ENCODE measurements at regions of chr12 and their contacts with region 1.

Region 1: DNA sequence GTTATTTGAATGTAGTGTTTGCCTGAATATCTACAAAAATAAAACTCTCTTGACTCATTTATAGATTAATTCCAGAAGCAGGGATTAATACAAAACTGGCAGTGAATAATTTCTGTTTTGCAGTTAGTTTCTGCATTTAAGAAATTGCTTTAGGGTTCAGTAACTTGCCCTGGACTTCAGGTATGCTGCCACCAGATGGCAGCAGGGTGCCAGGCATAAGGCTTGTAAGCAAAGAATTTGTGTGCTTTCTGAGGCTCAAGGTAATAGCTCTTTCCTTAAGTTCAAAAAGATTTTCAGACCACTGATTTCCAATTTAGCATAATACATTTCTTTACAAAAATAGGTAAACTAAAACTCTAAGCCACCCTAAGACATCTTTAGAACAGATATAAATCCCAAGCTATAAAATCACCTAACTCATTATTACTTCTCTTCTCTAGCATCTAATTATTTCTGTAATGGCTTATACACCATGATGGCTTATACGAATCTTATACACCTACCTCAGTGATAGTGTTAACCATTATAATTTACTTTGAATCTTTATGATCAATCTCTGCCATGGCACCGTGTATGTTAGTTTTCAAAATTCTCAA is 398.3 kb downstream of the APAF1 start:
- DNase-seq: peak; percentile 74
- H3K4me3 Mint-ChIP-seq: no peak overlapping the region
- H3K27ac Mint-ChIP-seq: no peak overlapping the region
- H3K4me1 Mint-ChIP-seq: no peaks in the 10 kb centered on the region
- H3K27me3 Mint-ChIP-seq: peaks cover 30% of the 10 kb centered on the region
- CTCF ChIP-seq: peak; percentile 63

Region 2: DNA sequence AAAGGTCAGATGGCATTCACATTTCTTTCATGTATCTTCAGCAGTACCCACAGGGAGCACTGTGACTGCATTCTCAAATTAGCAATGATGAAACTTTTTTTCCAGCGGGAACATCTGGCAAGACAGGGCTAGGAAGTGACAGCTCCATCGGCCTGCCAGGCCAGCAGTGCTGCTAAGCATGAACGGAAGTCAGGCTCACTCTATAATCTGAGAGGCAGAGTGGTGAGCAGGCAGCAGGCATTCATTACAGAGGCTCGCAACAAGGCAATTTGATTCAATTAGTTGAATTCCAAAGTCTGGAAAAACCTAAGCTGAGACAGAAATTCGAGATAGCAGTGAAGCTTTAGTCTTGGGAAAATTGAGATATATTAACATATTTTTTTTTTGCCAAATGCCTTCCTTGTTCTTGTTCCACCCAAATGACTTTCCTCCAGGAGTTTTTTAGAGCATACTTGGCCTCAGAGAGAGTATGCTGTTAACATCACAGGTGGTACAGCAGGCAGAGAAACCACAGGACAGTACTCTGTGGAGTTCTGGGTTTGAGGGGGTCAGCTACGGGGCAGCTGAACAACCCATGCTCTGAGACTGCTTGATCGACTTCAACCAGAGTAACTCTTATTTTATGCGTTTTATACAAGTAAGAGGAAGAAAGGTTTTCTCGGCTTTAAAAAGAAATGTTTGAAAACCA is 16.6 kb after region 1 on chr12:
- CTCF ChIA-PET with region 1: no interaction called
- intact Hi-C with region 1: no loop called
- DNase-seq: no peak
- H3K4me3 Mint-ChIP-seq: no peak overlapping the region
- H3K27ac Mint-ChIP-seq: no peak overlapping the region
- H3K4me1 Mint-ChIP-seq: no peaks in the 10 kb centered on the region
- H3K27me3 Mint-ChIP-seq: peaks cover 17% of the 10 kb centered on the region
- CTCF ChIP-seq: no peak

Region 3: GRCh38 chr12:99131751-99132199 is 88.4 kb after region 1 on chr12:
- CTCF ChIA-PET with region 1: no interaction called
- intact Hi-C with region 1: no loop called
- DNase-seq: no peak
- H3K4me3 Mint-ChIP-seq: no peak overlapping the region
- H3K27ac Mint-ChIP-seq: no peak overlapping the region
- H3K4me1 Mint-ChIP-seq: no peaks in the 10 kb centered on the region
- H3K27me3 Mint-ChIP-seq: no peaks in the 10 kb centered on the region
- CTCF ChIP-seq: no peak

Region 4: DNA sequence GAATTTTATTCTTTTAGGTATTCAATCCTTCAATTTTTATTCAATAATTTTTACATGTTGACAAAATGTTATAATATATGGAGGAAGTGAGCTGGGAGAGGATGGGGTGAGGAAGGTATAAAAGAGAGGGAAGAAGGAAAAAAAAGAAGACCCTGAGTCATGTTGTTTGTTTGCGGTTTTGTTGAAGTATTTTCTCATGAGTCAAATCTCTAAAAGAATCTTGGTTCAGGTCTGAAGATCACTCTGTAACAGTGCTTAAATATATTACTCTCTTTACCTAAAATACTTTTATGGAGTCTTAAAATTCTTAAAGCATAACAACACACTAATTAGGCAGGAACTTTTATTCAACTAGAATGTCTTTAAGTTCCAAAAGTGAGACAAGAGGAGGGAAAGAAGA is 114.5 kb after region 1 on chr12:
- CTCF ChIA-PET with region 1: no interaction called
- intact Hi-C with region 1: loop called (anchors 5 kb)
- DNase-seq: no peak
- H3K4me3 Mint-ChIP-seq: no peak overlapping the region
- H3K27ac Mint-ChIP-seq: no peak overlapping the region
- H3K4me1 Mint-ChIP-seq: peaks cover 25% of the 10 kb centered on the region
- H3K27me3 Mint-ChIP-seq: no peaks in the 10 kb centered on the region
- CTCF ChIP-seq: no peak

Region 5: DNA sequence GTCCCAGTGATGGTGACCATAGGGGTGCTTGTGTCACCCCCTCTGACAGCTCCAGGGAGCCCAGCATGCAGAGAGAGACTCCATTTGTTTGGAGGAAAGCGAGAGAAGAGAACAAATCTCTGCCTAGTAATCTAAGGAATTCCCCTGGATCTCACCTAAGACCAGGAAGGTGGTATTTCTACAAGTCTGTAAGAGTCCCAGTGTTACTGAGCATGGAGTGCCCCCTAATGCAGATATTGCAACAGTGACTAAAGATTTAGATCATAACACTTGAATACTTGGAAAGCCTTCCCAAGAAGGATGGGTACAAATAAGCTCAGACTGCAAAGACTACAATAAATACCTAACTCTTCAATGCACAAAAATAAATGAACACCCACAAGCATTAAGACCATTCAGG is 243.7 kb after region 1 on chr12:
- CTCF ChIA-PET with region 1: no interaction called
- intact Hi-C with region 1: loop called (anchors 1 kb)
- DNase-seq: no peak
- H3K4me3 Mint-ChIP-seq: no peak overlapping the region
- H3K27ac Mint-ChIP-seq: no peak overlapping the region
- H3K4me1 Mint-ChIP-seq: no peaks in the 10 kb centered on the region
- H3K27me3 Mint-ChIP-seq: no peaks in the 10 kb centered on the region
- CTCF ChIP-seq: no peak

Region 6: GRCh38 chr12:99619389-99620158 is 576.2 kb after region 1 on chr12:
- CTCF ChIA-PET with region 1: interaction called, 3 read pairs
- intact Hi-C with region 1: loop called (anchors 2 kb)
- DNase-seq: peak; percentile 7
- H3K4me3 Mint-ChIP-seq: no peak overlapping the region
- H3K27ac Mint-ChIP-seq: no peak overlapping the region
- H3K4me1 Mint-ChIP-seq: no peaks in the 10 kb centered on the region
- H3K27me3 Mint-ChIP-seq: no peaks in the 10 kb centered on the region
- CTCF ChIP-seq: peak; percentile 45

Region 7: GRCh38 chr12:99658671-99659349 is 615.4 kb after region 1 on chr12:
- CTCF ChIA-PET with region 1: interaction called, 20 read pairs
- intact Hi-C with region 1: loop called (anchors 1 kb)
- DNase-seq: no peak
- H3K4me3 Mint-ChIP-seq: no peak overlapping the region
- H3K27ac Mint-ChIP-seq: no peak overlapping the region
- H3K4me1 Mint-ChIP-seq: no peaks in the 10 kb centered on the region
- H3K27me3 Mint-ChIP-seq: no peaks in the 10 kb centered on the region
- CTCF ChIP-seq: no peak

Region 8: GRCh38 chr12:99767809-99768208 is 724.4 kb after region 1 on chr12:
- CTCF ChIA-PET with region 1: interaction called, 3 read pairs
- intact Hi-C with region 1: loop called (anchors 1 kb)
- DNase-seq: no peak
- H3K4me3 Mint-ChIP-seq: no peak overlapping the region
- H3K27ac Mint-ChIP-seq: no peak overlapping the region
- H3K4me1 Mint-ChIP-seq: no peaks in the 10 kb centered on the region
- H3K27me3 Mint-ChIP-seq: peaks cover 18% of the 10 kb centered on the region
- CTCF ChIP-seq: no peak